K562 (cell line): ENCODE measurements at regions of chr9 and their contacts with region 1.

Region 1: DNA sequence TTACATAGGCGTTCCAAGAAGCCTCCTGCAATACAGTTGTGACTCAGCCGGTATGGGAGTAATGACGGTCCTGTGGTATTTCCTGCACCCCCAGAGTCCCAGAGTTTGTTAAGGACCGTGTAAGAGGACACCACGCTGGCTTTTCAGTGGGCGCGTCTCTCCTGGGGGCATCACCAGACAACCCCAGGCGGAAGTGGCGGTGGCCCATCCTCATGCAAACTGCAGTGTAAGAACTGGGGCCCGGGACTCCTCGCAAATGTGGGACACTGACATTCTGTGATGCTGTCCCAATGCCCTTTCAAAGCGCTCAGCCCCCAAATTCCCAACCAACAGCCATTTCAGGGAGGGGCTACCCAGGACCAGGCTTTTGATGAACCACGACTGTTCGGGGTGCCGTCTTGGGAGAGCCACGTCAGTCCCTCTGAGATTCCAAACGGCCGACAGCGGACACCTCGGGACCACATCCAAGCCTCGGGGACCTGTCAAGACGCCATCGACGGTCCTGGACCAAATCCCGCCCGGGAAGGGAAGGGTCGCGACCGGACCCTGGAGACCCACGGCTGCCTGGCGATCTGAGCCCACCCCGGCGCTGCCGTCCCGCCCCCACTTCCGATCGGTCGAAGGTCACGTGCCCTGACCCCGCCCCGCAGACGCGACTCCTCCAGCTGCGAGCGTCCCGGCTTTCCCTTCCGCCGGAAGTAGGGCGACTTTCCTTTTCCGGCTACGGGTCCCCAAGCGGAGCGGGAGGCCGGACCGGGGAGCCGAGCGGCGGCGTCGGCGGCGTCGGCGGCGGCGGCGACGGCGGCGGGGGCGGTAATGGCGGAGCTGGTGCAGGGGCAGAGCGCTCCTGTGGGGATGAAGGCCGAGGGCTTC is at the start of gene FUBP3:
- DNase-seq: peak; percentile 95 to 96 (median 96)
- ATAC-seq: peak; percentile 93
- H3K4me3 ChIP-seq: peak within 1 kb of the TSS; percentile 93
- H3K27ac ChIP-seq: peak within 1 kb of the TSS; percentile 95
- H3K4me1 ChIP-seq: peaks cover 0 to 23% of the 10 kb centered on the region in 2 experiments; a peak in 4 of 5 replicates
- H3K27me3 ChIP-seq: no peaks in the 10 kb centered on the region
- CTCF ChIP-seq: no peak
- EP300 ChIP-seq: peak; percentile 30; the same call in 1 of the 2 replicates
- POLR2A ChIP-seq: peak; percentile 92
- RAD21 ChIP-seq: no peak
- polyA plus RNA-seq, gene FUBP3: 3.0 to 7.1 TPM

Region 2: GRCh38 chr9:130480331-130481072 is 98.6 kb before region 1 on chr9:
- CTCF ChIA-PET with region 1: no interaction called
- POLR2A ChIA-PET with region 1: interaction called, 3 read pairs
- in situ Hi-C with region 1: no loop called
- intact Hi-C with region 1: loop called (anchors 5 kb)
- DNase-seq: peak; percentile 63 to 74 (median 67)
- ATAC-seq: peak; percentile 94
- H3K4me3 ChIP-seq: no peak overlapping the region
- H3K27ac ChIP-seq: no peak overlapping the region
- H3K4me1 ChIP-seq: peaks cover under 1 to 34% of the 10 kb centered on the region in 2 experiments; a peak in 4 of 5 replicates
- H3K27me3 ChIP-seq: peaks cover 3 to 25% of the 10 kb centered on the region in 2 experiments; a peak in 2 of 5 replicates
- CTCF ChIP-seq: peak; percentile 79 to 86 (median 82)
- EP300 ChIP-seq: no peak
- POLR2A ChIP-seq: no peak
- RAD21 ChIP-seq: peak; percentile 68 to 89

Region 3: DNA sequence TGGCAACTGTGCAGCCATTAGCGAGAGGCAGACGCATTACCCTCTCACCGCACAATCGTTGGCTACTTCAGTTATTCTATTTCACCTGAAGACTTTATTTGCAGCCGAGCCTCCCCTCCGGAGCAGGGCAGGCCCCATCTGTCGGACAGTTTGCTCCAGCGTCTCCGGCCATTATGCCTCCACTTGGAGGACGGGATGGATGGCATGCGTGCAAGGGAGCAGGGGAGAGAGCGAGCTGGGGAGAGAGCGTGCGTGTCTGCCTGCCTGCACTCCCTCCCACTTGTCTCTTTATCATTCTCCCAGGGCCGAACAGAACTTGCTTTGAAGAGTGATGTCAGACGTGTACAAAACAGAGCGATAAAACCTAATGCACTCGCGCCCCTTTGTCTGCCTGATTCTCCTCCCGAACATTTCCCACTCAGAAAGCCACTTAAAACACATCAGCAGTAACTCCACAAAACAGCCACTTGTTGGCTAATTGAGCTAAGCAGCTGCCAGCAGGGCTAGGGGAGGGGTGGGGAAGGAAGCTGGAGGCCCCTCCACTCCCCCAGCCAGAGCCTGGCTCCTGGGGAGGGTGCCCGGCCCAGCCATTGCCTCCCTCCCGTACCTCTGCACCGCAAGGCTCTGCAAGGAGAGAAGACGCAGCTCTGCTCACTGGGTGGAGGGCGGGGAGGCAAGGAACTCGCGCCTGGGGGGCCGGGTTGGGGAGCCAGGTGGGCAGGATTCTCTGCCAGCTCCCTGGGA is 43.1 kb before region 1 on chr9:
- CTCF ChIA-PET with region 1: no interaction called
- POLR2A ChIA-PET with region 1: interaction called, 3 read pairs
- in situ Hi-C with region 1: no loop called
- intact Hi-C with region 1: loop called (anchors 5 kb)
- DNase-seq: peak; percentile 53 to 90 (median 71)
- ATAC-seq: peak; percentile 83
- H3K4me3 ChIP-seq: peak overlapping the region; percentile 33
- H3K27ac ChIP-seq: peak overlapping the region; percentile 71
- H3K4me1 ChIP-seq: peaks cover 50 to 73% of the 10 kb centered on the region in 2 experiments
- H3K27me3 ChIP-seq: no peaks in the 10 kb centered on the region
- CTCF ChIP-seq: no peak; a peak in 1 of 6 replicates
- EP300 ChIP-seq: peak; percentile 73
- POLR2A ChIP-seq: peak; percentile 58
- RAD21 ChIP-seq: 0 out of 4 replicates have a peak, but pooled peaks of 1 of the 2 experiments have one; percentile 6